ENCODE measurements at regions of chr7 and their contacts with region 1.

Region 1: DNA sequence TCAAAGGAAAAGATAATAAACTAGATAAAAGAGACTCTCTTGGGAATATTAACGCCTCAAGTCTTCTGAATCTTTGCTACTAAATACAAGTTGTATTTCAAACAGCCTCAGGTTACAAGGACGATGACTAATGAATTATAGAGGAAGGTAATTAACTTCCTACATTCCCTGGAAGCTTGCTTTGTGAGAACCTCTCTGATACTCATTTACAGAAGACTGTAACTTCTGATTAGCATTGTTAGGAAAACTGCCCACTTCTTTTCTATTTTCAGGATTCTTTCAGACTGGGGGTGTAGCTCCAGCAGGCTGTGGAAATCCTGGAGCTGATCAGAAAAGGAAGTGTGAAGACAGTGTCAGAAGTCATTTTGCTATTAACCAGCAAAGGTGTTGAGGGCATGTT is 316.7 kb upstream of the NPSR1 start:
- DNase-seq: no peak
- ATAC-seq: no peak
- H3K4me3 ChIP-seq: no peak overlapping the region
- H3K27ac ChIP-seq: no peak overlapping the region
- H3K4me1 ChIP-seq: no peaks in the 10 kb centered on the region
- H3K27me3 ChIP-seq: no peaks in the 10 kb centered on the region
- CTCF ChIP-seq: no peak
- POLR2A ChIP-seq: no peak

Region 2: GRCh38 chr7:33998476-33998875 is 342.8 kb before region 1 on chr7:
- intact Hi-C with region 1: no loop called
- DNase-seq: peak in 1 of 5 donors; percentile 24
- ATAC-seq: peak in 1 of 4 donors; percentile 45
- H3K4me3 ChIP-seq: no peak overlapping the region
- H3K27ac ChIP-seq: no peak overlapping the region
- H3K4me1 ChIP-seq: no peaks in the 10 kb centered on the region
- H3K27me3 ChIP-seq: no peaks in the 10 kb centered on the region
- CTCF ChIP-seq: no peak
- POLR2A ChIP-seq: no peak

Region 3: DNA sequence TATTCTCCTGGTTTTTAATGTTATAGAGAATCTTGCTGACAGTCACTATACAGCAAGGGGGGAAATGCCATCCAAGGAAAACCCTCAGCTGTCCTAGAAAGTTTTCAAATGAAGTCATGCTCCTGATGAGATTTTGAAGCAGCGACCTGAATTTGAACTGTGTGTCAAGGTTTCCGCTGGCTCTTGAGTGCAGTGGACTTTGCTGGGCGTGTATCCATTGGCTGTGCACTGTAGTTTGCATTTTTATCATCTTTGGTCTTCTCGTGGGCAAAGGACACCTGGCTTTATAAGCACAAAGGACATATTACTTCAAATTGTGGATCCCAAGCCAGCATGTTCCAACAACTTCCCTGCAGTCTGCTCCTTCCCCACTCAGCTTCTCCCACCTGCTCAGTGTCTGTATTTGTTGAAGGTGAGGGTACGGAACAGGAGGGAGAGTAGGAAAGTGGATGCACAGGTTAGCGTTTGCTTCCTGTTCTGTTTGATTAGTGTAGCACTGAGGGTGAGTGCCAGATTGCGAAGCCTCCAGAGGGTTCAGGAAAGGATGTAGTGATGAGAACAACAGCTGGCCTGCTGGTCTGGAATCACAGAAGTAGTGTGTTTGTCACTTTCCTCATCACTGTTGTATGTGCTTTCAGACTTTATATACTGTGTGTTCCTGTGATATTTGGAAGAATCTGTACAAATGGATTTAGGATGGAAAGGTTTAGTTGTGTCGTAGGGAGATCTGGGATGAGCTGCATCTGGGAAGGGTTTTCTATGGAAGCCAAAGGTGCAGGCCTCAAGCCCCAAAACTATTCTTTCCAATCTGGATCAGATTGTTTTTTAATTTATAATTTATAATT is 231.2 kb before region 1 on chr7:
- intact Hi-C with region 1: no loop called
- DNase-seq: peak in 1 of 5 donors; percentile 31
- ATAC-seq: peak in 3 of 4 donors; percentile 10 to 31 (median 28)
- H3K4me3 ChIP-seq: no peak overlapping the region
- H3K27ac ChIP-seq: no peak overlapping the region
- H3K4me1 ChIP-seq: peaks cover 0 to 23% (median 0%) of the 10 kb centered on the region in 12 donors
- H3K27me3 ChIP-seq: no peaks in the 10 kb centered on the region
- CTCF ChIP-seq: no peak
- POLR2A ChIP-seq: no peak

Region 4: GRCh38 chr7:34281260-34281659 is 60.1 kb before region 1 on chr7:
- intact Hi-C with region 1: loop called in 1 of 10 experiments (anchors 10 kb)
- DNase-seq: no peak
- ATAC-seq: no peak
- H3K4me3 ChIP-seq: no peak overlapping the region
- H3K27ac ChIP-seq: no peak overlapping the region
- H3K4me1 ChIP-seq: no peaks in the 10 kb centered on the region
- H3K27me3 ChIP-seq: no peaks in the 10 kb centered on the region
- CTCF ChIP-seq: no peak
- POLR2A ChIP-seq: no peak

Measured in heart left ventricle (tissue), 16 donors.